ENCODE measurements at regions of chr18 and their contacts with region 1.

Region 1: DNA sequence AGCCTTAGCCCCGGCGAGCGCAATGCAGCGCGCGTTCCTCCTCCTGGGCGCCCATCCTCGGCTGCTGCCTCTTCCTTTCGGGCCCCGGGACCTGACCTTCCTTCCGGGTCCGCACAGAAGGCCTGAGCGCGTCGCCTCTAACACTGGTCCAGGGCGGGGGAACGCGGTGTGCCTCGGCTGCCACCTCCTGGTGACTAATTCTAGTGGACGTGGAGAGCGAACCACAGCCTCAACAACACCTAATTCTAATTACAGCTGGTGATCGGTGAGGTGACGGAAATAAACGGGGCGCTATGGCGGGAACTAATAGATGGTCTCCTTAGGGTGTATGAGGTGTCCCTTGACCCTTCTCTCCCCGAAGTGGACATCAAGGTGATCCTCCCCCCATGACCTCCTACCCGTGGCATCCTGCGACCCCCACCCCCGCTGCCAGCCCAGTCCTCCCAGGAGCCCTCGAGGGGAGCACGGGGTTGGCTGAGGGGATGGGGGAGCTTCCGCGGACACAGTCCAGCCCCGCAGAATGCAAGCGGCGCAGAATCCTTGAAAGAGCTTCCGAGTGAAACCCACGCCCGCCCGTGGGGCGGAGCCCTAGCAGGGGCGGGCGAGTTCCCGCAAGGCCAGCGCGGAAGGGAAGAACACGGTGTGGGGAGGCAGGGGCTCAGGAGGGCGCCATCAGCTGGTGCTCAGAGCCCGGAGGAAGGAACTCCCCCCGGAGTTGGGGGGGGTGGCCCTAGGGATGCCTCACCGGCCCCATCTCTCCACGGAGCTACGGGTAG is 12.8 kb upstream of the HMSD start:
- DNase-seq: peak; percentile 9
- H3K4me3 ChIP-seq: peak overlapping the region; percentile 85
- H3K27me3 ChIP-seq: peaks cover 2% of the 10 kb centered on the region; the same call in 1 of the 2 replicates
- CTCF ChIP-seq: peak; percentile 74

Region 2: GRCh38 chr18:63848159-63848558 is 88.2 kb before region 1 on chr18:
- CTCF ChIA-PET with region 1: interaction called, 41 read pairs
- POLR2A ChIA-PET with region 1: no interaction called
- DNase-seq: no peak
- H3K4me3 ChIP-seq: no peak overlapping the region
- H3K27me3 ChIP-seq: no peaks in the 10 kb centered on the region
- CTCF ChIP-seq: peak; percentile 73

Region 3: DNA sequence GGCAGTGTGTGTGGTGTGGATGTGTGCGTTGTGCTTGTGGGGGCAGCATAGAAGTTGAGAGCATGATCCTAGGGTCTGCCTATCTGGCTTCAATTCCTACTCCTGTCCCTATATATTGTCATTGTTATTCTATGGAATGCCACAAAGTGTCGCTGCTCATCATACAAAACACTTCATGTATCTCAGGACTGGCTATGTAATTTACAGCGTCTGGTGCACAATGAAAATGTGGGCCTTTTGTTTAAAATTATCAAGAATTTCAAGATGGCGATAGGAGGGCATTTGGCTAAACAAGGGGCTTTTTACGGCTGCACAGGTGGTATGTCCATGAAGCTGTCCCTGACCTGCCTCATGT is 45.4 kb before region 1 on chr18:
- CTCF ChIA-PET with region 1: interaction called, 11 read pairs
- POLR2A ChIA-PET with region 1: no interaction called
- DNase-seq: no peak
- H3K4me3 ChIP-seq: no peak overlapping the region
- H3K27me3 ChIP-seq: 0 out of 2 replicates have a peak, but pooled peaks cover 1% of the 10 kb centered on the region
- CTCF ChIP-seq: 0 out of 2 replicates have a peak, but pooled peaks have one; percentile 12

Region 4: GRCh38 chr18:63963615-63964256 is 27.4 kb after region 1 on chr18:
- CTCF ChIA-PET with region 1: interaction called, 47 read pairs
- POLR2A ChIA-PET with region 1: no interaction called
- DNase-seq: no peak
- H3K4me3 ChIP-seq: no peak overlapping the region
- H3K27me3 ChIP-seq: peaks cover 6% of the 10 kb centered on the region
- CTCF ChIP-seq: peak; percentile 94

Measured in BJ (cell line).